Ascending aorta (tissue), 2 donors: ENCODE measurements at regions of chr12 and their contacts with region 1.

Region 1: GRCh38 chr12:2057041-2057794 is 4.4 kb downstream of the CACNA1C start:
- DNase-seq: peak in 1 of 2 donors; percentile 81
- H3K4me3 ChIP-seq: peak overlapping the region in 1 of 2 donors; percentile 99
- H3K27ac ChIP-seq: peak overlapping the region; percentile 77 to 99
- H3K4me1 ChIP-seq: peaks cover 12 to 41% of the 10 kb centered on the region in 2 donors
- H3K27me3 ChIP-seq: no peaks in the 10 kb centered on the region
- CTCF ChIP-seq: peak; percentile 89 to 91 (median 90)

Region 2: DNA sequence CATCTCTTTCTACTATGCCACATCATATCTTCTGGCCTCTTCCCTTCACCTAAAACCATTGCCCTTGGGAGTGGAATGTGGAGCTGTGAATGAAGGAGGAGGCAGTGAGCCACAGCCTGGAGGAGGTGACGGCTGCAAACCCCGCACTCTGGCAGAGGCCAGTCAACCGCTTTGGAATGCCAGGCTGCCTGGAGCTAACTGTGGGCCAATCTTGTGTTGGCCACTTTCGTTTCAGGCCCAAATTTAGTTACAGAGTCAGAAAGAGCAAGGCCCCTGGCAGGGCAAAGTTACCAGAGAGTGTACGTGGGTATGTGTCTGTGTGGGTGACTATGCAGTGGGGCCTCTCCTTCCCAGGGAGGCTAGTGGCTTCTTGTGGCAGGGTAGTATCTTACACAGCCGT is 35.7 kb after region 1 on chr12:
- intact Hi-C with region 1: loop called (anchors 1 kb)
- DNase-seq: peak; percentile 39 to 89
- H3K4me3 ChIP-seq: no peak overlapping the region
- H3K27ac ChIP-seq: peak overlapping the region; percentile 86 to 89
- H3K4me1 ChIP-seq: peaks cover 28 to 42% of the 10 kb centered on the region in 2 donors
- H3K27me3 ChIP-seq: no peaks in the 10 kb centered on the region
- CTCF ChIP-seq: no peak

Region 3: DNA sequence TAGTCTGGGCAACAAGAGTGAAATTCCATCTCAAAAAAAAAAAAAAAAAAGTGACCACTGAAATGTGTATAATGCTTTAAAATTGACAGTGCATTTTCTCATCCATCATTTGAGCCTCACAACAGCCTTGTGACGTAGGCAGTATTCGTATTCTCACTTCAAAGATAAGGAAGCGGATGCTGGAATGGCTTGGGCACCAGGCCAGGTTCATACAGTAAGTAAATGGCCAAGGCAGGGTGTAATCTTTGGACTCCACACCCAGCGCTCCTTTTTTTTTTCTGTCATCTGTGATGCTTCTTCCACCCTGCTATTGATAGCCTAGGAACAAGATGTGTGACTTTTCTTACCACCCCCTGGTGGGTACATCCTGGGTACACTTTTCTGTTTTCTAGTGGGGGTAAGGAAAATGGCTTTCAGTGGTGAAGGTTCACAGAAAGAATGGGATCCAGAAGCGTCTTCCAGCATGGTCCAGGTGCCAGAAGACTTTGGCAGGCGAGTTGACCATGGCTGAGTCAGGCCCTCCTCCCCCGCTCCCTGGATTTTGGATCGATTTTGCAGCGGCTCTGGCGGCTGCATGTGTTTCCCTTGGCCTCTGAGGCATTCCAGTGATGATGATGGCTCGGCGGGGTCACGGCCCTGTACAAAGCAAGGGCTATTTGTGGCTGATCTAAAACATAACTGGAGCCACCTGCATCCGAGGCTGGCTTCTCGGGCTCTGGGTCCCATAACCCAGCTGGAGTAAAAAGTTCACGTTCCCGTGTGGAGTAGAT is 106.1 kb after region 1 on chr12:
- intact Hi-C with region 1: loop called (anchors 2 kb)
- DNase-seq: peak; percentile 53 to 95
- H3K4me3 ChIP-seq: no peak overlapping the region
- H3K27ac ChIP-seq: peak overlapping the region; percentile 88 to 92
- H3K4me1 ChIP-seq: peaks cover 18 to 43% of the 10 kb centered on the region in 2 donors
- H3K27me3 ChIP-seq: no peaks in the 10 kb centered on the region
- CTCF ChIP-seq: no peak

Region 4: GRCh38 chr12:2273288-2273687 is 216.1 kb after region 1 on chr12:
- intact Hi-C with region 1: loop called (anchors 2 kb)
- DNase-seq: peak in 1 of 2 donors; percentile 81
- H3K4me3 ChIP-seq: no peak overlapping the region
- H3K27ac ChIP-seq: peak overlapping the region; percentile 64 to 84
- H3K4me1 ChIP-seq: peaks cover 7 to 25% of the 10 kb centered on the region in 2 donors
- H3K27me3 ChIP-seq: no peaks in the 10 kb centered on the region
- CTCF ChIP-seq: peak; percentile 35 to 81 (median 69)

Region 5: GRCh38 chr12:2583091-2583497 is 525.9 kb after region 1 on chr12:
- intact Hi-C with region 1: loop called (anchors 2 kb)
- DNase-seq: peak in 1 of 2 donors; percentile 77
- H3K4me3 ChIP-seq: peak overlapping the region in 1 of 2 donors; percentile 44
- H3K27ac ChIP-seq: peak overlapping the region in 1 of 2 donors; percentile 38
- H3K4me1 ChIP-seq: peaks cover 0 to 6% of the 10 kb centered on the region in 2 donors
- H3K27me3 ChIP-seq: no peaks in the 10 kb centered on the region
- CTCF ChIP-seq: peak; percentile 86 to 94 (median 94)